Gastrocnemius medialis (tissue), 4 donors: ENCODE measurements at regions of chr5 and their contacts with region 1.

Region 1: DNA sequence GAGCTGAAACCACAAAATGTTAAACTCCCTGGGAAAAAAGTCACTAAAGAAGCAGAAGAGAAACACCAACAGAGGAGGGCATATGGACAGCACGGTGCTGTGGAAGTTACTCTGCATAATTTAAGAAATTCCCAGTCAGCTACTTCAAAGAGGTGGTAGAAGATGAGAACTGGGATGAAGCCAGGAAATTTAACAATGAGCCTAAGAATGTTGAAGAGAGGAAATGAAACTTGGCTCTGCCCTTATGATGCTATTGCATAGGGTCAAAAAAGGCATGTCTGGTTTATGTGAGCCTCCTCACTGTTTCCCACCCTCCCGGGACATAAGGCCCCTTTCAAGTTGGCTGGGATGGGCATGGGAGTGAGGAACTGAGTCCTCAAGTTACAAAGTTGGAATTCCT is 25.4 kb upstream of the SNX18 start:
- DNase-seq: no peak
- ATAC-seq: no peak
- H3K4me3 ChIP-seq: no peak overlapping the region
- H3K27ac ChIP-seq: no peak overlapping the region
- H3K4me1 ChIP-seq: peaks cover 0 to 4% of the 10 kb centered on the region in 2 donors
- H3K27me3 ChIP-seq: no peaks in the 10 kb centered on the region
- CTCF ChIP-seq: no peak
- POLR2A ChIP-seq: no peak

Region 2: GRCh38 chr5:54062958-54063357 is 429.2 kb before region 1 on chr5:
- in situ Hi-C with region 1: no loop called
- intact Hi-C with region 1: no loop called
- DNase-seq: no peak
- ATAC-seq: no peak
- H3K4me3 ChIP-seq: no peak overlapping the region
- H3K27ac ChIP-seq: no peak overlapping the region
- H3K4me1 ChIP-seq: no peaks in the 10 kb centered on the region
- H3K27me3 ChIP-seq: no peaks in the 10 kb centered on the region
- CTCF ChIP-seq: no peak
- POLR2A ChIP-seq: no peak

Region 3: DNA sequence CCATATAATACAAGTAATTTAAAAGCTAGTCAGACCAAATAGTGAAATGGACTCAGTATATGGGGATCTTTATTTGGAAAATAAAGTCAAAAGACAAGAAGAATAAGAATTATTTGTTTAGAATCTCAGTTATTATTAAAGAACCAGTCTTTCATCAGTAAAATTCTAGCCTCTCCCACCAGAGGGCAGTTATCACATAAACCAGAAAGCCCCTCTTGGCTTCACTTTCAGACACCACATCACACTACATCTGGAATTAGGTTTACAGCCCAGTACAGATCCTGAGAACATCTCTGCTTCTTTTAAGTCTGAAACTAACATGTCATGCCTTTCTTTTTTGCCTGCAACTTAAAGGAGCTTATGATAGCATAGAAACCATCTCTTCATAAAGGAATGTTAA is 48.9 kb before region 1 on chr5:
- in situ Hi-C with region 1: loop called in 1 of 4 experiments (anchors 10 kb)
- intact Hi-C with region 1: loop called (anchors 1 kb)
- DNase-seq: no peak
- ATAC-seq: no peak
- H3K4me3 ChIP-seq: no peak overlapping the region
- H3K27ac ChIP-seq: no peak overlapping the region
- H3K4me1 ChIP-seq: peaks cover 9 to 12% of the 10 kb centered on the region in 2 donors
- H3K27me3 ChIP-seq: no peaks in the 10 kb centered on the region
- CTCF ChIP-seq: peak; percentile 12 to 48 (median 33)
- POLR2A ChIP-seq: no peak

Region 4: DNA sequence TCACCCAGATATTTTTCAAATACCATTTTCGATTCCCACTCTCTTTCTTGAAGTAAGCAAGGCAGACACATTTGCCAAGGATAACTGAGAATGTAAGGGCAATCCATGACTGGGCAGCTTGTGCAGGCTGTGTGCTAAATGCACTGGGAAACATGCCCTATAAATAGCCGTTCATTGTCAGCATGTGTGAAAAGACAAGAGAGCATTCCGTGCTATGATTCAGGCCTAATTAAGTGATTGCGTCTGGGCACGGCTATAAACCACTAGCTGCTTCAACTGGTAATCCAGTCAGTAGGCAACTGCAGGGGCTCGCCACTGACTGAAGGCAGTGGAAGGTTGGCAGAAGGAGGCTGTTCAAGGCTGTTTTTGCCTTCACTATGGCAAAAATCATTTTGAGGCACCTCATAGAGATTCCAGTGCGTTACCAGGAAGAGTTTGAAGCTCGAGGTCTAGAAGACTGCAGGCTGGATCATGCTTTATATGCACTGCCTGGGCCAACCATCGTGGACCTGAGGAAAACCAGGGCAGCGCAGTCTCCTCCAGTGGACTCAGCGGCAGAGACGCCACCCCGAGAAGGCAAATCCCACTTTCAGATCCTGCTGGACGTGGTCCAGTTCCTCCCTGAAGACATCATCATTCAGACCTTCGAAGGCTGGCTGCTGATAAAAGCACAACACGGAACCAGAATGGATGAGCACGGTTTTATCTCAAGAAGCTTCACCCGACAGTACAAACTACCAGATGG is 36.6 kb before region 1 on chr5 and contains the start of gene HSPB3:
- in situ Hi-C with region 1: no loop called
- intact Hi-C with region 1: no loop called
- DNase-seq: peak; percentile 78 to 81
- ATAC-seq: peak; percentile 79 to 90
- H3K4me3 ChIP-seq: peak within 1 kb of the TSS; percentile 56 to 61 (median 58)
- H3K27ac ChIP-seq: peak within 1 kb of the TSS; percentile 86 to 89 (median 86)
- H3K4me1 ChIP-seq: peaks cover 25 to 26% of the 10 kb centered on the region in 2 donors
- H3K27me3 ChIP-seq: no peaks in the 10 kb centered on the region
- CTCF ChIP-seq: peak in 1 of 5 experiments; percentile 9
- POLR2A ChIP-seq: peak; percentile 93 to 97
- total RNA-seq, gene HSPB3: 68.1 to 510 (median 204) TPM